ENCODE measurements at regions of chr7 and their contacts with region 1.

Region 1: GRCh38 chr7:1548438-1548831 is 7.6 kb downstream of the TMEM184A start:
- DNase-seq: peak in 2 of 14 experiments; percentile 31 to 47
- ATAC-seq: peak; percentile 37
- H3K4me3 ChIP-seq: no peak overlapping the region
- H3K4me3 Mint-ChIP-seq: peak overlapping the region; percentile 4
- H3K27ac ChIP-seq: no peak overlapping the region
- H3K27ac Mint-ChIP-seq: no peak overlapping the region
- H3K4me1 ChIP-seq: no peaks in the 10 kb centered on the region
- H3K4me1 Mint-ChIP-seq: no peaks in the 10 kb centered on the region
- H3K27me3 ChIP-seq: no peaks in the 10 kb centered on the region
- H3K27me3 Mint-ChIP-seq: no peaks in the 10 kb centered on the region
- CTCF ChIP-seq: no peak

Region 2: GRCh38 chr7:1503816-1504775 is 44.3 kb before region 1 on chr7 and contains the start of gene INTS1:
- CTCF ChIA-PET with region 1: interaction called, 3 read pairs
- POLR2A ChIA-PET with region 1: no interaction called
- intact Hi-C with region 1: loop called in 1 of 2 experiments (anchors 5 kb)
- DNase-seq: peak; percentile 82 to 94 (median 87)
- ATAC-seq: peak; percentile 83
- H3K4me3 ChIP-seq: peak within 1 kb of the TSS; percentile 74
- H3K4me3 Mint-ChIP-seq: peak within 1 kb of the TSS; percentile 90
- H3K27ac ChIP-seq: peak within 1 kb of the TSS in 1 of 2 donors; percentile 29
- H3K27ac Mint-ChIP-seq: peak within 1 kb of the TSS; percentile 71
- H3K4me1 ChIP-seq: peaks cover 60% of the 10 kb centered on the region
- H3K4me1 Mint-ChIP-seq: peaks cover 31% of the 10 kb centered on the region
- H3K27me3 ChIP-seq: no peaks in the 10 kb centered on the region
- H3K27me3 Mint-ChIP-seq: peaks cover 4% of the 10 kb centered on the region
- CTCF ChIP-seq: peak; percentile 87
- total RNA-seq, gene INTS1: 91.0 to 91.5 TPM